ENCODE measurements at regions of chr18 and their contacts with region 1.

Region 1: DNA sequence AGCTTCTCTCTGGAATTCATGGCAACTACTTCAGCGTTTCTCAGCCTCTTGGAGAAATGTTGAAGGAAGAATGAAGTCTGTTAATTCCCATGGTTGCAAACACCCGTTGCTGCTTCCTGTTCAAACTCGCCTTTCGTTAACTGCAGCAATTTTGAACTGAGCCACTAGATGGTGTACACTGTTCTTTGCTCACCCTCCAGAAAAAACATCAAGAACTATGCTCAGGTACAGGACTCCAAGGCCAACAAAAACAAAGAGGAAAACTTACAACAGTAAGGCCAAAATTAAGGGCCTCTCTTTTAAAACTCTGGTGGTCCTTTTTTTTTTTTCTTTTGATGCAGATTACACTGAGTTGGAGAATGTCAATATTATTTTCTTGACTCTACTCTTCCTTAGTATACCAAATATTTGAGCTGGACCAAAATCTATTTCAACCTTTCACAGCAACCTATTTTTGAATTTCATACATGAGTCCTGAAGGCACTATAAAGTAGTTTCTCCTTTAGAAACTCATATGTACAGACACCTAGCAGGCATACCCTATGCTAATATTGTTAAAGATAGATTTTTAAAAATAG is 58.2 kb downstream of the KLHL14 start:
- DNase-seq: peak in 4 of 10 donors; percentile 15 to 55 (median 24)

Region 2: GRCh38 chr18:32840962-32841361 is 126.3 kb after region 1 on chr18:
- intact Hi-C with region 1: no loop called
- DNase-seq: no peak

Region 3: GRCh38 chr18:33201509-33201926 is 486.9 kb after region 1 on chr18:
- intact Hi-C with region 1: loop called (anchors 5 kb)
- DNase-seq: peak in 3 of 10 donors; percentile 3 to 74 (median 17)

Measured in posterior cingulate gyrus (tissue), 11 donors.